ENCODE measurements at regions of chr5 and their contacts with region 1.

Region 1: DNA sequence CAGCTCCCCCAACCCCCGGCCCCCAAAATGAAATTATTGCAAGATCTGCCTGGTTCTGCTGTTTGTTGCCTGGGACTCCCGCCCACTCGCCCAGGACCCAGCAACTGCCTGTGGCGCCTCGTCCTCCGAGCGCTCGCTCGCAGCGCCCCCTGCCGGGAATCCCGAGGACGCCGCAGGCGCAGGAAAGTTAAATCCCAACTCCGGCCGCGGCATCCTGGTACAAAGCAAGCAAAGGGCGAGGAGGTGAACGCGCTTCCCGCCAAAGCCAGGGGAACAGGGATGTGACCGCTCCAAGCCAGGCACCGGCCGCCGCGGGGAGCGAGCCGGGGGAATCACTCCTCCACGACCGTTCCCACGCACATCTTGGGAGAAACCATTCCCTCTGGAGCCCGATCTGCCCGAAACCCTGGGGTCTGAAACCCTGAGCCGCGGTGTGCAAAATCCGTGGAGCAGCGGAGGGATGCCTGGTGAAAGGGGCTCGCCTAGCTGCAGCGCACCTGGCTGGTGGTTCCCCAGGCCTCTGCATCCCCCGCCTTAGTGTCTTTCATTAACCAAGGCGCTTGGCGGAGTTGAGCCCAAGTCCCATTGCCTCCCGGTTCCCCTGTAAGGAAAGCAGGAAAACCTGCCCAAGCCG is 1.3 kb downstream of the SEMA5A start:
- DNase-seq: peak; percentile 97
- ATAC-seq: peak; percentile 65
- H3K4me3 ChIP-seq: peak overlapping the region; percentile 76
- H3K27ac ChIP-seq: no peak overlapping the region
- H3K4me1 ChIP-seq: peaks cover 9% of the 10 kb centered on the region; the same call in 1 of the 2 replicates
- H3K27me3 ChIP-seq: no peaks in the 10 kb centered on the region
- CTCF ChIP-seq: peak; percentile 99

Region 2: DNA sequence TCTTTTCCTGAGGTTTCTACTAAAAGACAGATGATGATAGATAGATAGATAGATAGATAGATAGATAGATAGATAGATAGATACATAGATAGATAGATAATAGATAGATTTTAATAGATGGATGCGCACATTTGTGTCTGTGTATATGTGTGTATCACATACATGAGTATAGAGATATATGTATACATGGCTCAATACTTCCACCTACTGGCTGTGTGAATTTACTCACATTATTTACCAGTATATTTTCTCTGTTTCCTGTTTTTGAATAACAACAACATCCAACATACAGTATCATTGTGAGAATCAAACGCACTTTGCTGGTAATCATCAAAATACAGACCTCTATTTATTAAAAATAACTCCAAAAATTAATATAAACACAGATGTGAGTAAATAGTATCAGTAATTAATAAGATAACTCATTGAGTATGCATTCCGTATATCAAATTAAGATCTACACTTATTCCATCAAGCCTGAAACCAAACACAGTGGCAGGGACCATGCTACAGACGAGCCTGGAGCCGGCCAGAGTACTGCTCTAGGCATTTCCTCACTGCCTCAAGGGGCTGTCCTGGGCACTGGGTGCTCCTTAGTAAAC is 336.7 kb before region 1 on chr5:
- CTCF ChIA-PET with region 1: no interaction called
- POLR2A ChIA-PET with region 1: no interaction called
- intact Hi-C with region 1: loop called (anchors 10 kb)
- DNase-seq: peak; percentile 90
- ATAC-seq: peak; percentile 51
- H3K4me3 ChIP-seq: no peak overlapping the region
- H3K27ac ChIP-seq: no peak overlapping the region
- H3K4me1 ChIP-seq: peaks cover 36% of the 10 kb centered on the region
- H3K27me3 ChIP-seq: no peaks in the 10 kb centered on the region
- CTCF ChIP-seq: peak; percentile 90

Region 3: GRCh38 chr5:9361835-9362234 is 182.8 kb before region 1 on chr5:
- CTCF ChIA-PET with region 1: no interaction called
- POLR2A ChIA-PET with region 1: no interaction called
- intact Hi-C with region 1: loop called (anchors 1 kb)
- DNase-seq: peak; percentile 97
- ATAC-seq: peak; percentile 74
- H3K4me3 ChIP-seq: no peak overlapping the region
- H3K27ac ChIP-seq: no peak overlapping the region
- H3K4me1 ChIP-seq: peaks cover 15% of the 10 kb centered on the region
- H3K27me3 ChIP-seq: no peaks in the 10 kb centered on the region
- CTCF ChIP-seq: peak; percentile 100

Region 4: GRCh38 chr5:9455826-9456434 is 88.7 kb before region 1 on chr5:
- CTCF ChIA-PET with region 1: no interaction called
- POLR2A ChIA-PET with region 1: interaction called, 14 read pairs
- intact Hi-C with region 1: no loop called
- DNase-seq: no peak
- ATAC-seq: no peak
- H3K4me3 ChIP-seq: no peak overlapping the region
- H3K27ac ChIP-seq: no peak overlapping the region
- H3K4me1 ChIP-seq: no peaks in the 10 kb centered on the region
- H3K27me3 ChIP-seq: no peaks in the 10 kb centered on the region
- CTCF ChIP-seq: no peak

Region 5: GRCh38 chr5:9479361-9479760 is 65.3 kb before region 1 on chr5:
- CTCF ChIA-PET with region 1: no interaction called
- POLR2A ChIA-PET with region 1: no interaction called
- intact Hi-C with region 1: no loop called
- DNase-seq: no peak
- ATAC-seq: no peak
- H3K4me3 ChIP-seq: no peak overlapping the region
- H3K27ac ChIP-seq: no peak overlapping the region
- H3K4me1 ChIP-seq: 0 out of 2 replicates have a peak, but pooled peaks cover 3% of the 10 kb centered on the region
- H3K27me3 ChIP-seq: no peaks in the 10 kb centered on the region
- CTCF ChIP-seq: no peak

Region 6: GRCh38 chr5:9951866-9952516 is 407.4 kb after region 1 on chr5:
- CTCF ChIA-PET with region 1: no interaction called
- POLR2A ChIA-PET with region 1: no interaction called
- intact Hi-C with region 1: no loop called
- DNase-seq: no peak
- ATAC-seq: no peak
- H3K4me3 ChIP-seq: no peak overlapping the region
- H3K27ac ChIP-seq: no peak overlapping the region
- H3K4me1 ChIP-seq: no peaks in the 10 kb centered on the region
- H3K27me3 ChIP-seq: peaks cover 7% of the 10 kb centered on the region; the same call in 1 of the 2 replicates
- CTCF ChIP-seq: no peak; the same call in 1 of the 2 replicates

Region 7: DNA sequence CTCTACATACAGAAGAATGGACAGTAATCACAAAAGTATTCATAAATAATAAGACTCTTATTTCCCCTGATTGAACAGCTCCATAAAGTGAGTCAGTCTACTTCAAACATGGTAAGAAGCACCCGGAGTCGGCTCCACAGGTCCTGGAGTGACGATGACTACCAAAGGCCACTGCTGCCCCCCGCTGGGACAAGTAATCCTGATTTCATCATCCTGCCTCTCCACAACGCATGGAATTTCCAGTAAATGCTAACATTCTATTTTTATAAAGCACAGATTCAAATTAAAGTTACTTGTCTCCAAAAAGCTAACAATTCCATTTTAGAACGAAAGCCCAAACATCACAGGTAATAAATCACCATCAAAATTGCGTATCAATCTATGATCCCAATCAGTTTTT is 688.9 kb after region 1 on chr5:
- CTCF ChIA-PET with region 1: no interaction called
- POLR2A ChIA-PET with region 1: no interaction called
- intact Hi-C with region 1: loop called (anchors 10 kb)
- DNase-seq: peak; percentile 95
- ATAC-seq: peak; percentile 94
- H3K4me3 ChIP-seq: no peak overlapping the region
- H3K27ac ChIP-seq: peak overlapping the region; percentile 16
- H3K4me1 ChIP-seq: peaks cover 21% of the 10 kb centered on the region
- H3K27me3 ChIP-seq: no peaks in the 10 kb centered on the region
- CTCF ChIP-seq: peak; percentile 95